Left colon (tissue), 2 donors: ENCODE measurements at regions of chr15 and their contacts with region 1.

Region 1: DNA sequence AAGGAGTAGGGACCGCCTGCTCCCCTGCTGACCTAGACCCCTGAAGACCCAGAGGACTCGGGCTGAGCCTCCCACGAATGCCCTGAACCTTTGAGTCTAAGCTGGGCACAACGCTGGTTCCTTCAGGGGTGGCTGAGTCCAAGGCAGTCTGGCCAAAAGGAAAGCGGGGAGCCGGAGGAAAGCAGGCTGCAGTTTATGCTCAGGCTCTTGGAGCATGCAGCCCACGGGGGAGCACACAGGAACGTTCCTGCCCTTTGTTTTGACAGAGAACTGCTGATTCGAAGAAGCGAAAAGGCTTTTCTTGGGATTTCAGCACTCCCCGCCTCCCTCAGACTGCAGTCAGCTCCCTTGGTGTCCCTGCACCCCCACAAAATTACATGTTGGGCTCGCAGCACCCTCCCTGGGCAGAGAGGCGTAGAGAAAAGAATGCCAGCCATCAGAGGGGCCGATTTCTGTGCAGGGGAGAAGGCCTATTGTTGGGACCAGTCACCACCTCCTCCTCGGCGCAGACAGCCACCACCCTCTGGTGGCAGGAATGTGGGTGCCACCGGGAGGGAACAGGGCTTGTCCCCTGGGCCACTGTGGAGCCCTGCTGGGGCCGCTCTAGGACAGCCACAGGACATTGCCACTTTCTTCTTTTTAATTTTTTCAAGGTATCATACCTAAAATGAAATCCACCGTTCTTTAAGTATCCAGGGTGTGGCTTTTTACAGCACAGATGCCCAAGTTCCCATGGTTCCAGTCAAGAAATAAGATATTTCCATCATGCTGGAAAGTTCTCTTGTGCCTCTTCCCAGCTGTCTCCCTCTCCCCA is 72.2 kb downstream of the SMAD6 start:
- DNase-seq: peak; percentile 79 to 89
- ATAC-seq: peak; percentile 72

Region 2: GRCh38 chr15:66707310-66708082 is 66.7 kb before region 1 on chr15:
- intact Hi-C with region 1: loop called in 1 of 2 experiments (anchors 5 kb)
- DNase-seq: peak; percentile 58
- ATAC-seq: peak; percentile 41